Activated CD4-positive, alpha-beta T cell treated with anti-CD3 and anti-CD28 coated beads, Interleukin-2, amount 10 ng/mL, durations not matched to agents 24 days and 14 days (primary cell): ENCODE measurements at regions of chr12 and their contacts with region 1.

Region 1: DNA sequence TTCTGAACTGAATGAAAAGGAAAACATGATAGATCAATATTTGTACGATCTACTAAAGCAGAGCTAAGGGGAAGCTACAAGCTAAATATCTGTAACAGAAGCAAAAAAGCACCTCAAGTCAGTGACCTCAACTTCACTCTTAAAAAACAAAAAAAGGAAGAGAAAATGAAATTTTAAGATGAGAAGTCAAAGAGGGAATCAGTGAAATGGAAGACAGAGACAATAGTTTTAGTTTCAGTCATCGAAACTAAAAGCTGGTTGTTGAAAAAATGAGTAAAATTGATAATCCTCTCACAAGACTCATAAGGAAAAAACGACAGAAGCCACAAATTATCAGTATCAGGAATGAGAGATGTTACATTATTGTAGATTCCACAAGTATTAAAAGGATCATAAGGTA is 11.9 kb upstream of the SLC2A13 start:
- DNase-seq: no peak
- H3K4me3 Mint-ChIP-seq: no peak overlapping the region
- H3K27ac Mint-ChIP-seq: peak overlapping the region; percentile 20
- H3K4me1 Mint-ChIP-seq: peaks cover 6% of the 10 kb centered on the region
- H3K27me3 Mint-ChIP-seq: peaks cover 23% of the 10 kb centered on the region

Region 2: GRCh38 chr12:40137252-40137651 is 19.4 kb after region 1 on chr12:
- intact Hi-C with region 1: loop called (anchors 2 kb)
- DNase-seq: peak; percentile 64
- H3K4me3 Mint-ChIP-seq: no peak overlapping the region
- H3K27ac Mint-ChIP-seq: no peak overlapping the region
- H3K4me1 Mint-ChIP-seq: peaks cover 12% of the 10 kb centered on the region
- H3K27me3 Mint-ChIP-seq: peaks cover 14% of the 10 kb centered on the region

Region 3: GRCh38 chr12:40168868-40169267 is 51.0 kb after region 1 on chr12:
- intact Hi-C with region 1: loop called (anchors 1 kb)
- DNase-seq: peak; percentile 65
- H3K4me3 Mint-ChIP-seq: peak overlapping the region; percentile 57
- H3K27ac Mint-ChIP-seq: peak overlapping the region; percentile 63
- H3K4me1 Mint-ChIP-seq: peaks cover 19% of the 10 kb centered on the region
- H3K27me3 Mint-ChIP-seq: peaks cover 26% of the 10 kb centered on the region